ENCODE measurements at regions of chr19 and their contacts with region 1.

Region 1: DNA sequence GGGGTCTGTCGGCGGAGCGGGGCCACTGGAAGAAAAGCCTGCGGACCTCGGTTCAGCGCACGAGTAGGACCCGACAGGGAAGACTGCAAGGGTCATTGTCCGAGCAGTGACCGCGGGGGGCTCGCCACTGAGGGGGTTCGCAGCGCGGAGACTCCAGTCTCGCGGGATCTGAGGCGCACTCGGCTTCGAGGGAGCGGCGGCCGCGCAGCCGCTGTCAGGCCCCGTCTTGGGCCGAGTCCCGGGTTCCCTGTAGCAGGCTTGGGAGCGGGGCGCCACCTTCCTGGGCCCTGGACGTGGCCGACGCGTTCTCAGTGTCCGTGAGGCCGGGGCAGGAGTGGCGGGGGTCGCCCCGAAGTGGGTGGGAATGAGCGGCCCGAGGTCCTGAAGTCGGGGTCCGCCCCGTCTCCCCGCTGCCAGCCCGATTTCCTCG is 485 bp upstream of the FAM174C start:
- DNase-seq: no peak

Region 2: GRCh38 chr19:1241417-1242095 is 33.3 kb before region 1 on chr19 and contains the start of gene ATP5F1D:
- CTCF ChIA-PET with region 1: interaction called, 149 read pairs
- POLR2A ChIA-PET with region 1: interaction called, 375 read pairs
- DNase-seq: peak; percentile 89

Region 3: DNA sequence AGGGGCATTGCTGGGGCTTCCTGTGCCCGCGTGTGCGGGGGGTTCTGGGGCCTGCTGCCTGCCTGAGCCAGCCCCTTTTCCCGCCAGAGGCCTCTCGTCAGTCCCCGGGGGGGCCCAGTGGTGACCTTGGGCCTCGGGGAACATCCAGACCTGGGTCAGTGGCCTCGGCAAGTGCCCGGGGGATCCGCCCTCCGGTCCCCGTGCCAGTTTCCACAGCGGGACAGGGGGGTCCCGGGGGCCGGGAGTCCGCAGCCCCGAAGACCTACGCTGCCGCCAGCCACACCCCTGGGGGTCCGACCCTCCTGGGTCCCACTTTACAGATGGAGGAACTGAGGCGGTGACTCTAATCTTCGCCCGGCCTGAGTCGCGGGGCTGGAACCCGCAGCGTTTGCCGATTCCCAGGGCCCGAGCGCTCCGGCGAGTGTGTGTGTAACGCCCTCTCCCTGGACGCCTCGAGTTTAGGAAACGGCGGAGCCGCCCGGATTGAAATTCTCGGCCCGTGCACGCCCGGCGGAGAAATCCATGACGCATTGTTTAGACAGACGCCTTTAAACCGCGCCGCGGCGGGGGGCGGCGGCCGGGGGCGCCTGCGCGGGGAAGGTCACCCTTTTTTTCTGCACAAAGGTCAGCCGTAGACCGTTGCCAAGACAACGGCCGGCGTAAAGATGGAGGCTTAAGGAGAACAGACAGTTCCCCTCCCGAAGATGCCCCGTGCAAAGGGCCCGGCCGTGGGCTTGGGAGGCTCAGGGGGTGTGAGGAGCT is 50.1 kb after region 1 on chr19:
- CTCF ChIA-PET with region 1: no interaction called
- POLR2A ChIA-PET with region 1: no interaction called
- DNase-seq: peak; percentile 72

Measured in HEK293T (cell line).